B cell (primary cell): ENCODE measurements at regions of chr10 and their contacts with region 1.

Region 1: GRCh38 chr10:931416-932318 is at the start of gene LARP4B:
- DNase-seq: peak; percentile 99
- ATAC-seq: peak; percentile 96
- H3K4me3 ChIP-seq: peak within 1 kb of the TSS; percentile 60 to 89 (median 74)
- H3K4me3 Mint-ChIP-seq: peak within 1 kb of the TSS; percentile 97
- H3K27ac ChIP-seq: peak within 1 kb of the TSS; percentile 89
- H3K27ac Mint-ChIP-seq: peak within 1 kb of the TSS; percentile 95
- H3K4me1 ChIP-seq: peaks cover 30 to 33% of the 10 kb centered on the region in 2 donors
- H3K4me1 Mint-ChIP-seq: peaks cover 47% of the 10 kb centered on the region
- H3K27me3 ChIP-seq: peaks cover 0 to 4% (median 2%) of the 10 kb centered on the region in 4 experiments
- H3K27me3 Mint-ChIP-seq: peaks cover 17% of the 10 kb centered on the region
- CTCF ChIP-seq: no peak
- total RNA-seq, gene LARP4B: 124 and 129 TPM in 2 replicates

Region 2: GRCh38 chr10:761376-761775 is 170.3 kb before region 1 on chr10:
- CTCF ChIA-PET with region 1: no interaction called
- POLR2A ChIA-PET with region 1: no interaction called
- intact Hi-C with region 1: no loop called
- DNase-seq: no peak
- ATAC-seq: no peak
- H3K4me3 ChIP-seq: no peak overlapping the region
- H3K4me3 Mint-ChIP-seq: no peak overlapping the region
- H3K27ac ChIP-seq: no peak overlapping the region
- H3K27ac Mint-ChIP-seq: no peak overlapping the region
- H3K4me1 ChIP-seq: peaks cover 0 to 8% of the 10 kb centered on the region in 2 donors
- H3K4me1 Mint-ChIP-seq: peaks cover 3% of the 10 kb centered on the region
- H3K27me3 ChIP-seq: peaks cover 0 to 5% (median 0%) of the 10 kb centered on the region in 4 experiments
- H3K27me3 Mint-ChIP-seq: peaks cover 32% of the 10 kb centered on the region
- CTCF ChIP-seq: no peak

Region 3: GRCh38 chr10:944034-944831 is 12.6 kb after region 1 on chr10:
- CTCF ChIA-PET with region 1: interaction called, 3 read pairs
- POLR2A ChIA-PET with region 1: interaction called, 3 read pairs
- intact Hi-C with region 1: loop called (anchors 1 kb)
- DNase-seq: peak; percentile 58
- ATAC-seq: peak; percentile 77
- H3K4me3 ChIP-seq: peak overlapping the region in 4 of 5 experiments; percentile 8 to 43 (median 32)
- H3K4me3 Mint-ChIP-seq: peak overlapping the region; percentile 66
- H3K27ac ChIP-seq: no peak overlapping the region
- H3K27ac Mint-ChIP-seq: peak overlapping the region; percentile 51
- H3K4me1 ChIP-seq: peaks cover 11 to 18% of the 10 kb centered on the region in 2 donors
- H3K4me1 Mint-ChIP-seq: peaks cover 17% of the 10 kb centered on the region
- H3K27me3 ChIP-seq: no peaks in the 10 kb centered on the region
- H3K27me3 Mint-ChIP-seq: no peaks in the 10 kb centered on the region
- CTCF ChIP-seq: no peak

Region 4: DNA sequence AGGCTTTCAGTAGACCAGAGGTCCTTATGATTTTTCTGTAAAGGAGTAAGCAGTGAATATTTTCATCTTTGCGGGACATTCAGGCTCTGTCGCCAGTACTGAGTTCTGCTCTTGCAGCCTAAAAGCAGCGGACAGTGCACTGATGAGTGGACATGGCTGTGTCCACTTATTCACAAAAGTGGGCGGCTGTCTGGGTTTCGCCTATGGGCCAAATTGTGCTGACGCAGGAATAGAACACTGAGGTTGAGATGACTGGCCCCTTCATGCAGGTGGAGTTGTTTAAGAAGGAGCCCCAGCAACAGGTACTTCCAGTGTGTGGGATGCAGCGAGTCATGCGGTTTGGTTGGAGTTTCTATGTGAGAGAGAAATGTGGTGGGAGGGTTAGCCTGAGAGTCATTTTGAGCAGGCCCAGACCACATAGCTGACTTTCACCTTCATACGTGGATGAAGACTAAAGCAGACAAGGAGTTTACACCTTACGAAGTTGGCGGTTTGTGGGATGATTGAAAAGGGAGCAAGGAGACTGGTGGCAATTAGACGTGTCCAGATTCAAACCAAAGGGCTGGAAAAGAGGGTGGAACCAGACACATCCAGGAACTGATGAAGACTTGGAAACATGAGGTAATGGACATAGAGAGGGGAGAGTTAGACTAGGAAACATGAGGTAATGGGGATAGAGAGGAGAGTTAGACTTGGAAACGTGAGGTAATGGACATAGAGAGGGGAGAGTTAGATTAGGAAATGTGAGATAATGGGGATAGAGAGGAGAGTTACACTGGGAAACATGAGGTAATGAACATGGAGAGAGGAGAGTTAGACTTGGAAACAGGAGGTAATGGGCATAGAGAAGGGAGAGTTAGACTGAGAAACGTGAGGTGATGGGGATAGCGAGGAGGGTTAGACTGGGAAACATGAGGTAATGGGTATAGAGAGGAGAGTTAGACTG is 162.7 kb after region 1 on chr10:
- CTCF ChIA-PET with region 1: no interaction called
- POLR2A ChIA-PET with region 1: no interaction called
- intact Hi-C with region 1: no loop called
- DNase-seq: no peak
- ATAC-seq: no peak
- H3K4me3 ChIP-seq: no peak overlapping the region
- H3K4me3 Mint-ChIP-seq: no peak overlapping the region
- H3K27ac ChIP-seq: no peak overlapping the region
- H3K27ac Mint-ChIP-seq: no peak overlapping the region
- H3K4me1 ChIP-seq: no peaks in the 10 kb centered on the region
- H3K4me1 Mint-ChIP-seq: no peaks in the 10 kb centered on the region
- H3K27me3 ChIP-seq: no peaks in the 10 kb centered on the region
- H3K27me3 Mint-ChIP-seq: no peaks in the 10 kb centered on the region
- CTCF ChIP-seq: no peak